Activated T-helper 2 cell treated with anti-CD3 and anti-CD28 coated beads, Interferon-gamma antibody, Interleukin-2, Interleukin-4, amounts not matched to agents 10 μg/mL and 5 μg/mL and 100 μg/mL, durations not matched to agents 14 hours and 24 hours and 36 hours (primary cell): ENCODE measurements at regions of chr2 and their contacts with region 1.

Region 1: GRCh38 chr2:88874063-88874657 is 182.7 kb downstream of the RPIA start:
- DNase-seq: peak; percentile 17
- H3K4me3 Mint-ChIP-seq: no peak overlapping the region
- H3K27ac Mint-ChIP-seq: no peak overlapping the region
- H3K4me1 Mint-ChIP-seq: no peaks in the 10 kb centered on the region
- H3K27me3 Mint-ChIP-seq: peaks cover 9% of the 10 kb centered on the region

Region 2: DNA sequence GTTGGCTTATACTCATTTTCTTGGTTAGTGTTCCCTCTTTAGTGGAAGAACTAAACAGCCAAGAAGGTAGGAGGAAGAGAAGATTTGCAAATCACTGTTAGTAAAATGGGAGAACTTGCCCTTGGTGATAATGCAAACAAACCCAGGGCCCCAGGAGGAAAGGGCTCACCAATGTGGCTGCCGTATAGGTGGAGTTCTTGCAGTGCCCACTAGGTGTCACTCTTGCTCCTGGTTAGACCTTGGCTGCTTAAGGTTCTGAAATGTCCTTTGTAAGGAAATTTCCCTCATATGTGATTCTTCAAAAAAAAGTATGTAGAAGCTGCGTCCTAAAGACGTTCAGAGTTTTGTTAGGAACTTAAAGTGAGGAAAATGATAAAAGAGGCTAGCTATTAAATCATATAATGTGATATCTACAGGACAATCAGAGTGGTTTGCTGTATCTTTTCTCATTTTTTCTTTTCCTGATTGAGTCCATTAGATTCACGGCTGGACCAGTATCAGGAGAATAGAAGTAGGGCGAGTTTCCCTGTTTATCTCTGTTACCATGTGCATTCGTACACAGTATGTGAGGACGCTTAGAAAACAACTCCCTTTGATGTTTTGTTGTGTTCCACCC is 134.1 kb before region 1 on chr2:
- intact Hi-C with region 1: loop called (anchors 10 kb)
- DNase-seq: peak; percentile 48
- H3K4me3 Mint-ChIP-seq: no peak overlapping the region
- H3K27ac Mint-ChIP-seq: no peak overlapping the region
- H3K4me1 Mint-ChIP-seq: peaks cover 34% of the 10 kb centered on the region
- H3K27me3 Mint-ChIP-seq: no peaks in the 10 kb centered on the region